ENCODE measurements at regions of chr13 and their contacts with region 1.

Region 1: GRCh38 chr13:67147342-67148133 is 82.6 kb downstream of the PCDH9 start:
- DNase-seq: no peak
- ATAC-seq: peak; percentile 25
- H3K4me3 Mint-ChIP-seq: peak overlapping the region; percentile 39
- H3K27ac Mint-ChIP-seq: peak overlapping the region; percentile 43
- H3K4me1 Mint-ChIP-seq: peaks cover 38% of the 10 kb centered on the region
- H3K27me3 Mint-ChIP-seq: no peaks in the 10 kb centered on the region
- CTCF ChIP-seq: no peak

Region 2: DNA sequence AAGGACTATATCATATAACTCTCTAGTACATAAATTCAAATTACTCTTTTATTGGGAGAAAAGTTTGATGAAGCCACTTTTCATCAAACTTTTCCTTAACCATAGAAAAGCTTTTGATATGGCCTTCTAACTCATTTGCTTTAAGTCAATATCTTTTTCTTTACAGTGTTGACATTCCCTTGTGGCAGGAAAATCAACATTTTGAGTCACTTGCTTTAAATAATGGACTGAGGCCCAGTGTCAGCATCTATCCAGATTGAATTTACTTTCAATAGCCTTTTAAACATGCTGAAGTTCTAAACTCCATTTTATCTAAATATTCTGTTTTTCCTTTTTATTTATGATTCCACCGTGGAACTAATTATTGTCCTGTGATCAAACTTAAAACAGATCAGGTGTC is 19.9 kb after region 1 on chr13:
- CTCF ChIA-PET with region 1: no interaction called
- POLR2A ChIA-PET with region 1: no interaction called
- intact Hi-C with region 1: loop called (anchors 2 kb)
- DNase-seq: no peak
- ATAC-seq: no peak
- H3K4me3 Mint-ChIP-seq: no peak overlapping the region
- H3K27ac Mint-ChIP-seq: no peak overlapping the region
- H3K4me1 Mint-ChIP-seq: no peaks in the 10 kb centered on the region
- H3K27me3 Mint-ChIP-seq: no peaks in the 10 kb centered on the region
- CTCF ChIP-seq: no peak